OCI-LY7 (cell line): ENCODE measurements at regions of chr11 and their contacts with region 1.

Region 1: GRCh38 chr11:75500752-75501151 is 25.0 kb downstream of the GDPD5 start:
- DNase-seq: no peak
- H3K4me3 ChIP-seq: no peak overlapping the region
- H3K27ac ChIP-seq: no peak overlapping the region
- H3K4me1 ChIP-seq: peaks cover 24% of the 10 kb centered on the region
- CTCF ChIP-seq: no peak

Region 2: DNA sequence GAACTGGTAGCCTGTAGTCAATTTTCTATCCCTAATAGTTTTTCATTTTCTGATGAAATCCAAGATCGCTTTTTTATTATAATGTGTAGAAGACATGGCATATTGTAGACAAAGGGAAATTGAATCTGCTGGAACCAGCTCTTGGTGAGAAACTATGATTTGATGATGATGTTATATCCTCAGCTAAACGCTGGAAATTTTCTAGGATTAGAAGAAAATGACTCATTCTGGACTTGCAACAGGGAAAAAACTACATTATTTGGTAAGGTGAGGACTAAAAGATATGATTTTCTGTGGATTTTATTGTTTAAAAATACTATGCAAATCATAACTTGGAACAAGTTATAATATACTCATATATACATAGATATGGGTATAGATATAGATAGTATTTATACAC is 1088.4 kb before region 1 on chr11:
- CTCF ChIA-PET with region 1: no interaction called
- POLR2A ChIA-PET with region 1: interaction called, 10 read pairs
- intact Hi-C with region 1: no loop called
- DNase-seq: no peak
- H3K4me3 ChIP-seq: no peak overlapping the region
- H3K27ac ChIP-seq: no peak overlapping the region
- H3K4me1 ChIP-seq: no peaks in the 10 kb centered on the region
- CTCF ChIP-seq: no peak

Region 3: GRCh38 chr11:75582895-75583717 is 82.4 kb after region 1 on chr11:
- CTCF ChIA-PET with region 1: no interaction called
- POLR2A ChIA-PET with region 1: no interaction called
- intact Hi-C with region 1: no loop called
- DNase-seq: peak; percentile 12
- H3K4me3 ChIP-seq: no peak overlapping the region
- H3K27ac ChIP-seq: no peak overlapping the region
- H3K4me1 ChIP-seq: no peaks in the 10 kb centered on the region
- CTCF ChIP-seq: no peak